ENCODE measurements at regions of chr9 and their contacts with region 1.

Region 1: GRCh38 chr9:84170521-84171141 is 169.9 kb downstream of the SLC28A3 start:
- DNase-seq: peak; percentile 6 to 21 (median 12)
- ATAC-seq: peak; percentile 76
- H3K4me3 ChIP-seq: no peak overlapping the region
- H3K27ac ChIP-seq: no peak overlapping the region
- H3K4me1 ChIP-seq: no peaks in the 10 kb centered on the region; a peak in 1 of 5 replicates
- H3K27me3 ChIP-seq: peaks cover 0 to 15% of the 10 kb centered on the region in 2 experiments; a peak in 1 of 5 replicates
- CTCF ChIP-seq: no peak
- EP300 ChIP-seq: no peak
- POLR2A ChIP-seq: no peak
- RAD21 ChIP-seq: no peak

Region 2: GRCh38 chr9:83920927-83921707 is 249.5 kb before region 1 on chr9 and contains the start of gene KIF27:
- CTCF ChIA-PET with region 1: no interaction called
- POLR2A ChIA-PET with region 1: no interaction called
- in situ Hi-C with region 1: no loop called
- intact Hi-C with region 1: loop called (anchors 5 kb)
- DNase-seq: peak; percentile 89 to 95 (median 90)
- ATAC-seq: peak; percentile 97
- H3K4me3 ChIP-seq: peak within 1 kb of the TSS; percentile 61
- H3K27ac ChIP-seq: peak within 1 kb of the TSS; percentile 81; the same call in 2 of the 3 replicates
- H3K4me1 ChIP-seq: peaks cover 0 to 6% of the 10 kb centered on the region in 2 experiments; a peak in 3 of 5 replicates
- H3K27me3 ChIP-seq: no peaks in the 10 kb centered on the region
- CTCF ChIP-seq: peak; percentile 9 to 62 (median 31); a peak in 3 of 6 replicates
- EP300 ChIP-seq: no peak
- POLR2A ChIP-seq: peak; percentile 65
- RAD21 ChIP-seq: no peak
- polyA plus RNA-seq, gene KIF27: 0.32 to 0.50 TPM

Region 3: DNA sequence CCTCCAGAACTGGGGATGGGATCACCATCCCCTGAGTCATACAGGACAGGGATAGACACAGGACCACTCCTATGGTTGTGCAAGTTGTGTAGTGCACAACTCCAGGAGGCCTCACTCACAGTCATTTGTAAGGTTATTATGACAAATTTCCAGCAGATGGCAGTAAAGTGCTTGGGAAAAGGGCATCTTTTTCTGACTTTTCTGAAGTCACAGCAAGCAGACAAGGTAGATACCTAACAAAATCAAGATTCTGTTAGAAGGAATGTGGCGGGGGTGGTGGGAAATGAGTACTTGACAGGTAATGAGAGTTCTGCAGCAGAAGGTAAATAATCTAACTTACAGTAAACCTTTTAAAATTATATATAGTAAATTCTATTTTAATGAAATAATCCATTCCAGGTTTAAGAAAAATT is 232.7 kb before region 1 on chr9:
- CTCF ChIA-PET with region 1: no interaction called
- POLR2A ChIA-PET with region 1: no interaction called
- in situ Hi-C with region 1: no loop called
- intact Hi-C with region 1: loop called (anchors 1 kb)
- DNase-seq: peak; percentile 41 to 63 (median 52)
- ATAC-seq: peak; percentile 84
- H3K4me3 ChIP-seq: no peak overlapping the region
- H3K27ac ChIP-seq: no peak overlapping the region
- H3K4me1 ChIP-seq: no peaks in the 10 kb centered on the region
- H3K27me3 ChIP-seq: no peaks in the 10 kb centered on the region
- CTCF ChIP-seq: peak; percentile 43 to 67 (median 57); a peak in 5 of 6 replicates
- EP300 ChIP-seq: no peak
- POLR2A ChIP-seq: no peak
- RAD21 ChIP-seq: peak; percentile 61 to 67

Region 4: GRCh38 chr9:84145780-84146179 is 24.9 kb before region 1 on chr9:
- CTCF ChIA-PET with region 1: no interaction called
- POLR2A ChIA-PET with region 1: no interaction called
- in situ Hi-C with region 1: no loop called
- intact Hi-C with region 1: loop called (anchors 2 kb)
- DNase-seq: no peak
- ATAC-seq: no peak
- H3K4me3 ChIP-seq: no peak overlapping the region
- H3K27ac ChIP-seq: no peak overlapping the region
- H3K4me1 ChIP-seq: peaks cover 0 to under 1% of the 10 kb centered on the region in 2 experiments; a peak in 1 of 5 replicates
- H3K27me3 ChIP-seq: peaks cover 1 to 9% of the 10 kb centered on the region in 2 experiments; a peak in 3 of 5 replicates
- CTCF ChIP-seq: no peak
- EP300 ChIP-seq: no peak
- POLR2A ChIP-seq: no peak
- RAD21 ChIP-seq: no peak

Region 5: DNA sequence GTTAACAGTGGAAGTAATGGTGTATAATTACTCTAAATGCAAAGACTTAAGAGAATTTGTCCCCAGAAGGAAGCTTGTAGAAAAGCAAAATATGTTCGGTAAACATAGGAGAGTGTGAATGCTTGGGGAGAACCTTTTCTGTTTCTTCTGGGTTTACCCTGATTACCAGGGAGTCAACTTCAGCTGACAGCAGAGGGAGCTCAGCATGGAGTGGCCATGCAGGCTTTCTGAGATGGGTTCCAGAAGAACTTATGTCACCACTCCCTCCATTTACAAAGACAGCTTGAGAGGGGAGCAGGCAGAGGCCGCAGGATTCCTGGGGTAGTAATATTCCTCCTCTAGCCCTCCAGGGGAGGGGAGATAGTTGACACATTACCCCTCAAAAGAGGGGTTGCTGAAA is 74.2 kb after region 1 on chr9:
- CTCF ChIA-PET with region 1: no interaction called
- POLR2A ChIA-PET with region 1: no interaction called
- in situ Hi-C with region 1: no loop called
- intact Hi-C with region 1: no loop called
- DNase-seq: no peak
- ATAC-seq: no peak
- H3K4me3 ChIP-seq: no peak overlapping the region
- H3K27ac ChIP-seq: no peak overlapping the region
- H3K4me1 ChIP-seq: no peaks in the 10 kb centered on the region
- H3K27me3 ChIP-seq: peaks cover 0 to 11% of the 10 kb centered on the region in 2 experiments; a peak in 1 of 5 replicates
- CTCF ChIP-seq: no peak
- EP300 ChIP-seq: no peak
- POLR2A ChIP-seq: no peak
- RAD21 ChIP-seq: no peak

Region 6: DNA sequence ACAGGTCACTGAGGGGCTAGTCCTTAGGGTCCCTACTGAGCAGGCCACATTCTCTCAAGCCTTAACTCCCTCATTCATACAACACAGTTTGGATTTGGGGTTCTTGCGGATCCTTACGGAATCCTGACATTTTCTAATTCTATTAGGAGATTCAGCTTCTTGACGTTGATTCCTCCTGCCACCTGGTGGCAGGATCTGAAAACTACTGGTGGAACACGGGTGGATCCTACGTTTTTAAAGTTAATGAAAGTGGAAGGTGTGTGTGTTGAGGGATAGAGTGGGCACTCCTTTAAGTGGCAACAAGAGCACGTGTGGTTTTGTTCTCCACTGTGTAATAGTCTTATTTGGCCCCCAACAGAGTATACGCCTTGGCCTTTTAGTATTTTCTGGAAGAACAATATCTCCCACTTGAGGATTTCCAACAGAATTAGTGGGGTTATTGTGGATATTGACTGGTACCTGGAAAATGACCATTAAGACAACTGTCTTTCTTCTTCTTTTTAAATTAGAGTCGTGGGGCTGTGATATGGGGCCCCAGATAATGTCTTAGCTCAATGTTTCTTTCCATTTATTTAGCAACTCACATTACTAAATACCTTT is 144.7 kb after region 1 on chr9:
- CTCF ChIA-PET with region 1: no interaction called
- POLR2A ChIA-PET with region 1: no interaction called
- in situ Hi-C with region 1: no loop called
- intact Hi-C with region 1: loop called (anchors 10 kb)
- DNase-seq: peak; percentile 32 to 63 (median 40)
- ATAC-seq: peak; percentile 72
- H3K4me3 ChIP-seq: no peak overlapping the region
- H3K27ac ChIP-seq: no peak overlapping the region
- H3K4me1 ChIP-seq: no peaks in the 10 kb centered on the region
- H3K27me3 ChIP-seq: no peaks in the 10 kb centered on the region
- CTCF ChIP-seq: peak; percentile 45 to 66 (median 65); a peak in 5 of 6 replicates
- EP300 ChIP-seq: no peak
- POLR2A ChIP-seq: no peak
- RAD21 ChIP-seq: peak; percentile 45 to 58

Measured in K562 (cell line).